ENCODE measurements at regions of chr22 and their contacts with region 1.

Region 1: GRCh38 chr22:37686002-37686982 is at the start of gene NOL12:
- DNase-seq: peak; percentile 78 to 87 (median 84)
- ATAC-seq: peak; percentile 86 to 91 (median 88)
- H3K4me3 ChIP-seq: peak within 1 kb of the TSS; percentile 78 to 99 (median 88)
- H3K27ac ChIP-seq: peak within 1 kb of the TSS; percentile 75 to 85 (median 82)
- H3K4me1 ChIP-seq: peaks cover 0 to 29% (median 13%) of the 10 kb centered on the region in 4 donors
- H3K27me3 ChIP-seq: no peaks in the 10 kb centered on the region
- CTCF ChIP-seq: peak in 1 of 4 donors; percentile 5
- POLR2A ChIP-seq: peak; percentile 32
- total RNA-seq, gene NOL12: 8.4 to 16.1 (median 9.4) TPM

Region 2: GRCh38 chr22:37734964-37735451 is 48.7 kb after region 1 on chr22:
- intact Hi-C with region 1: loop called in 1 of 2 experiments (anchors 10 kb)
- DNase-seq: peak; percentile 77 to 87 (median 84)
- ATAC-seq: peak; percentile 69 to 85 (median 80)
- H3K4me3 ChIP-seq: no peak overlapping the region
- H3K27ac ChIP-seq: no peak overlapping the region
- H3K4me1 ChIP-seq: peaks cover 0 to 35% (median 10%) of the 10 kb centered on the region in 4 donors
- H3K27me3 ChIP-seq: no peaks in the 10 kb centered on the region
- CTCF ChIP-seq: peak; percentile 58 to 63 (median 60)
- POLR2A ChIP-seq: no peak